ENCODE measurements at regions of chr16 and their contacts with region 1.

Region 1: DNA sequence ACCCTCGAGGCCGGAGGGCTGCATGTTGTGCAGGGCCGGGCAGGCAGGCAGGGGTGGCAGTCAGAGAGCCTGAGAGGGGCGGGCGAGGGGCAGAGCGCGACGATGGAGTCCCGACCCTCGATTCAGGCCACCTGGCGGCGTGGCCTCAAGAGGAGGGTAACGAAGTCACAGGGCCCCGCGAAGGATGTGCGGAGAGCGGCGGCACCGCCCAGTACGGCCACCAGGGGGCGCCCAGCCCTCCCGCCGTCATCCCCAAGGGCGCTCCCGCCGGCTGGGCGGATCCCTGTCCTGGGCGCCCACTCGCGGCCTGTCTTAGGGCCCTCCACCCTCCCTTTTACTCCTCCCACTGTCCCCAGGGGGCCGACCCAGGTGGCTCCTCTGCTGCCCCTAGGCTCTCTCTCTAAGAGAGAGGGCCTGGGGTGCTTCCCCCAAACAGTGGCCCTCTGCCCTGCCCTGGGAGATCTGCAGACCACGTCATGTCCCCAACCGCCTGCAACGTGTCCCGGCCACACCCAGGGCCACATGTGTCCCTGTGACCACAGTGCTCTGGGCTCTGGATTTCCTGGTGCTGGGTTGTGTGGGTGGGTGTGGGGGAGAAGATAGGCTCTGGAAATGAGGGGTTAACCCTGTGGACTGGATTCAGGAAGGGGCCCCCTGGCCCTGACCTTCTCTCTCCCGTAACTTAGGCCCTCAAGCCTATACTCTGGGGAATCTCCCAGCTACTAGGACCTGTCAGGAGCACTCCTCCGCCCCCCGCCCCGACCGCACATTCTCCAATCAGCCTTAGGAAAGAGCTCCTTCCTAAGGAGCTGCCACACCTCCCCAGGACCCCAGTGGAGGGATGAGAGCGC is 5.9 kb downstream of the DPEP2 start:
- DNase-seq: peak; percentile 92
- ATAC-seq: peak; percentile 89
- H3K4me3 Mint-ChIP-seq: peak overlapping the region; percentile 69
- H3K27ac Mint-ChIP-seq: peak overlapping the region; percentile 96
- H3K4me1 Mint-ChIP-seq: peaks cover 38% of the 10 kb centered on the region
- H3K27me3 Mint-ChIP-seq: no peaks in the 10 kb centered on the region

Region 2: GRCh38 chr16:67641779-67642708 is 351.4 kb before region 1 on chr16:
- CTCF ChIA-PET with region 1: no interaction called
- POLR2A ChIA-PET with region 1: no interaction called
- intact Hi-C with region 1: no loop called
- DNase-seq: no peak
- ATAC-seq: no peak
- H3K4me3 Mint-ChIP-seq: no peak overlapping the region
- H3K27ac Mint-ChIP-seq: no peak overlapping the region
- H3K4me1 Mint-ChIP-seq: peaks cover 12% of the 10 kb centered on the region
- H3K27me3 Mint-ChIP-seq: no peaks in the 10 kb centered on the region

Region 3: DNA sequence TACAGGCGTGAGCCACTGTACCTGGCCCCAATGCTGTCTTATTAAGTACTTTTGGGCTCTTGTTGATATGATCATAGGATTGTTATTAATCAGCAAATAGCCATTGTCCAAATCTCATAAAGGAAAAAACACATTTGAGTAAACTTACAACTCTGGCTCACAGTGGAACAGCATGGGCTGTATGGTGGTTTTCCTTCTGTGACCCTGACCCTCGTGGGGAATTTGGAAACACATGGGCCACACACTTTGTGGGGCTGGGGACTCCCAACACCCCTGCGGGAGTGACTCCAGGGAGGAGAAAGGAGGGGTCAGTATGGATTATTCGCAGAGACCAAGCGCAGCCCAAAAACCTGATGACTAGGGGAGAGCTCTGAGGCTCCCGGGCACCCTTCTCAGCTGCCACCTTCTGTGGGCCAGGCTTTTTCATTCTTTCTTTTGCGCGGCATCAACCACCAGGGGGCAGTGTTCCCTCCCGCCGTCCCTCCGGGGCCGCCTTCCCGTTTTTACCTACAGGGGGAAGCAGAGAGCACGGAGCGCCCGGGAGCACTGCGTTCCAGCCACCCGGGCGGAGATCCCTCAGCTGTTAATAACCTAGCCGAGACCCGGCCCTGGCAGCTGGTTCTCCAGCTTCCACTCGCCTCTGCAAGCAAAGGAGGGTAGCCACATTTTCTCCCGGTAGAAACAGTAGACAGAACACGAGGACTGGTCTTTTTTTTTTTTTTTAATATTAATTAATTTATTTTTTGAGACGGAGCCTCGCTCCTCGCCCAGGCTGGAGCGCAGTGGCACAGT is 177.0 kb before region 1 on chr16:
- CTCF ChIA-PET with region 1: no interaction called
- POLR2A ChIA-PET with region 1: no interaction called
- intact Hi-C with region 1: no loop called
- DNase-seq: peak; percentile 95
- ATAC-seq: peak; percentile 99
- H3K4me3 Mint-ChIP-seq: no peak overlapping the region
- H3K27ac Mint-ChIP-seq: peak overlapping the region; percentile 67
- H3K4me1 Mint-ChIP-seq: peaks cover 2% of the 10 kb centered on the region
- H3K27me3 Mint-ChIP-seq: no peaks in the 10 kb centered on the region

Region 4: GRCh38 chr16:67982011-67982696 is 11.3 kb before region 1 on chr16:
- CTCF ChIA-PET with region 1: interaction called, 11 read pairs
- POLR2A ChIA-PET with region 1: no interaction called
- intact Hi-C with region 1: no loop called
- DNase-seq: no peak
- ATAC-seq: no peak
- H3K4me3 Mint-ChIP-seq: no peak overlapping the region
- H3K27ac Mint-ChIP-seq: no peak overlapping the region
- H3K4me1 Mint-ChIP-seq: peaks cover 25% of the 10 kb centered on the region
- H3K27me3 Mint-ChIP-seq: no peaks in the 10 kb centered on the region

Region 5: GRCh38 chr16:68022704-68023522 is 29.5 kb after region 1 on chr16 and contains the starts of genes DDX28 and DUS2:
- CTCF ChIA-PET with region 1: interaction called, 6 read pairs
- POLR2A ChIA-PET with region 1: interaction called, 21 read pairs
- intact Hi-C with region 1: loop called (anchors 1 to 2 kb)
- DNase-seq: peak; percentile 95
- ATAC-seq: peak; percentile 89
- H3K4me3 Mint-ChIP-seq: peak within 1 kb of the TSS; percentile 95
- H3K27ac Mint-ChIP-seq: peak within 1 kb of the TSS; percentile 97
- H3K4me1 Mint-ChIP-seq: peaks cover 23% of the 10 kb centered on the region
- H3K27me3 Mint-ChIP-seq: no peaks in the 10 kb centered on the region
- total RNA-seq, gene DDX28: 13.7 to 17.1 TPM
- total RNA-seq, gene DUS2: 29.5 to 33.1 TPM

Region 6: DNA sequence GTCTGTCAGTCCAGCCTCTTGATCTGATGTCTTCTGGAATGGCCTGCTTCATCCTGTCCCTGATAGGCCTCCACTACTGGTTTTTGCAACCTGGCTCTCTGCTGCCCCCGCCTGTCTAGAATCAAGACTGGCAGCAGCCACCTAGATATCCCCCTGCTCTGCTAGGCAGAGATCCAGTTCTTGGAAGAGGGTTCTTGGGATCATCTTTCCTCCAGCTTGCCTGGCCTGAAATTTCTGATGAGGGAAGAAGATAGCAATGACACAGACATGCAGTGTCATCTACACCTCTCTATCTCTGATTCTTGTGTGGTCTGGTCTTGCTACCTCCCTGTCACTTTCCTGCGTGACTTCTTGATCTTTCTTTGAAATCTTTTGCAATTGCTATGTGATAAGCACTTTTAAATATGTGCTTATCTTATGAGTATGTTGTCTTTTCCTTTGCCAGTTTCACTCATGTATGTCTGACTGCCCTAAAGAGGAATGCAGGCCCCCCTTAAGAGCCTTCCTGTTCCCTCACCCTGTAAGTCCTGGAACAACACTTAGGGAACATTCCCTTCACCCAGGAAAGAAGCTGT is 71.5 kb after region 1 on chr16:
- CTCF ChIA-PET with region 1: interaction called, 4 read pairs
- POLR2A ChIA-PET with region 1: no interaction called
- intact Hi-C with region 1: loop called (anchors 1 to 2 kb)
- DNase-seq: peak; percentile 85
- ATAC-seq: peak; percentile 81
- H3K4me3 Mint-ChIP-seq: no peak overlapping the region
- H3K27ac Mint-ChIP-seq: peak overlapping the region; percentile 69
- H3K4me1 Mint-ChIP-seq: peaks cover 67% of the 10 kb centered on the region
- H3K27me3 Mint-ChIP-seq: no peaks in the 10 kb centered on the region

Measured in activated CD4-positive, alpha-beta T cell treated with anti-CD3 and anti-CD28 coated beads for 36 hours (primary cell).